ENCODE measurements at regions of chr3 and their contacts with region 1.

Region 1: DNA sequence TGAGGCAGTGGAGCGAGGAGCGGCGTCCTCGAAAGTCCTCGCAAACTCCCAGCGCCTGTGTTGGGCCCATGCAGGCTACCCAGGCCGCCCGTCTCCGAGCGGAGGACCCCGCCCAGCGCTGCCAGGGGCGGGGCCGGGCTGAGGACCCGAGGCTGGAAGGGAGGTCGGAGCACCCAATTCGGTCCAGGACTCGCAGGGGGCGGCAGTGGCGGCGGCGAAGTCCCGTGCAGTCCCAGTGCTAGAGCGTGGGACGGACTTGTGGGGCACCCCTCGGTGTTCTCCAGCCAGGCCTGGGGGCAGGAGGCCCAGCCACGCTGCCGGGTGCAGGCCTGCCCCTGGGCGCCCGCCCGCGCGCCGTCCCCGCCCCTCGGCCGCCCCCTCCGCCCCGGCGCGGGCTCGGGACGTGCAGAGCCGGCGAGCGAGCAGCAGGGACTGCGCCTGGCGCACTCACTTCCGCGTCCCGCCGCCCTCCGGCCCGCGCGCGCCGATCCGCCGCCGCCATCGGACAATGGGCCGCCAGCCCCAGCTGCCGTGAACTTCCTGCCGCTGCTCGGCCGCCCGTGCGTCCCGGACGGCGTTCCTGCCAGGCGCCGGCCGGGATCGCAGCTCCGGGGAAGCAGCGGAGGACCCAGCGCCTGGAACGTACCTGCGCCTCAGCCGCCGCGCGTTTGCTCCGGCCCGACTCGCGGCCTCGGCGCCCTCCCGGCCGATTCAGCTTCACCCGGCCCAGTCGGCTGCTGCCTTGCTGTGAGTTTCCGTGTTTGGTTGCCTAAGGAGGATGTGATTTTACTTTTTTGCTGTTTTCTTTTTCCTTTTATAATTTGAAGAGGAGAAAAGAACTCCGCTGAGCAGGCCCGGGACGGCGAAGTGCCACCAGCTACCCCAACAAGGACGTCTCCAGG is 592 bp upstream of the LIMD1 start:
- DNase-seq: peak; percentile 56 to 80
- ATAC-seq: peak; percentile 84 to 86
- H3K4me3 ChIP-seq: peak overlapping the region; percentile 63
- H3K27ac ChIP-seq: peak overlapping the region; percentile 89 to 94
- H3K4me1 ChIP-seq: peaks cover 32% of the 10 kb centered on the region
- CTCF ChIP-seq: no peak
- EP300 ChIP-seq: no peak
- POLR2A ChIP-seq: peak; percentile 48
- RAD21 ChIP-seq: no peak

Region 2: GRCh38 chr3:45441584-45442310 is 152.2 kb before region 1 on chr3:
- CTCF ChIA-PET with region 1: no interaction called
- POLR2A ChIA-PET with region 1: no interaction called
- DNase-seq: no peak
- ATAC-seq: no peak
- H3K4me3 ChIP-seq: no peak overlapping the region
- H3K27ac ChIP-seq: no peak overlapping the region
- H3K4me1 ChIP-seq: no peaks in the 10 kb centered on the region
- CTCF ChIP-seq: no peak
- EP300 ChIP-seq: no peak
- POLR2A ChIP-seq: no peak
- RAD21 ChIP-seq: no peak

Region 3: GRCh38 chr3:45507820-45508317 is 86.1 kb before region 1 on chr3:
- CTCF ChIA-PET with region 1: interaction called, 11 read pairs
- POLR2A ChIA-PET with region 1: no interaction called
- DNase-seq: peak in 1 of 2 experiments; percentile 27
- ATAC-seq: peak; percentile 69 to 82; a peak in 5 of 6 replicates
- H3K4me3 ChIP-seq: no peak overlapping the region
- H3K27ac ChIP-seq: no peak overlapping the region
- H3K4me1 ChIP-seq: 0 out of 3 replicates have a peak, but pooled peaks cover 7% of the 10 kb centered on the region
- CTCF ChIP-seq: no peak
- EP300 ChIP-seq: no peak
- POLR2A ChIP-seq: no peak
- RAD21 ChIP-seq: no peak; a peak in 1 of 5 replicates

Measured in A549 (cell line).